Heart right ventricle (tissue), 16 donors: ENCODE measurements at regions of chr6 and their contacts with region 1.

Region 1: DNA sequence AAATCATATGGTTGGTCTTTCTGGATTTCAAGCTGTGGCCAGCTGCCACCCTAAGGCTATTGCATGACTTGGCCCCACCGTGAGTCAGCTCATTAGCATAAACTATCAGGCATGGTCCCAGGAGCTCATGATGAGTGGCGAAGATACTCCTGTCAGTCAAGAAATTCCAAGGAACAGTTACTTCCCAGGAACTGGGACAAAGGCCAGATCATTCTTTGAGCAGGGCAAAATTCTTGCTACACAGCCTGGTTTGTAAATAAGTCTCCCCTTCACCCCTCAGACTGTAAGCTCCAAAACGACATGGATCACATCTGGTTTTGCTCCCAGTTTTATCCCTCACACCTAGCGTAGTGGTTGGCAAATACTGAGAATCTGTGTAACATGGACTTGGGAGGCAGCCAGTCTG is 33.0 kb upstream of the KIAA1586 start:
- DNase-seq: no peak
- ATAC-seq: no peak
- H3K4me3 ChIP-seq: no peak overlapping the region
- H3K27ac ChIP-seq: no peak overlapping the region
- H3K4me1 ChIP-seq: no peaks in the 10 kb centered on the region
- H3K27me3 ChIP-seq: no peaks in the 10 kb centered on the region
- CTCF ChIP-seq: no peak

Region 2: DNA sequence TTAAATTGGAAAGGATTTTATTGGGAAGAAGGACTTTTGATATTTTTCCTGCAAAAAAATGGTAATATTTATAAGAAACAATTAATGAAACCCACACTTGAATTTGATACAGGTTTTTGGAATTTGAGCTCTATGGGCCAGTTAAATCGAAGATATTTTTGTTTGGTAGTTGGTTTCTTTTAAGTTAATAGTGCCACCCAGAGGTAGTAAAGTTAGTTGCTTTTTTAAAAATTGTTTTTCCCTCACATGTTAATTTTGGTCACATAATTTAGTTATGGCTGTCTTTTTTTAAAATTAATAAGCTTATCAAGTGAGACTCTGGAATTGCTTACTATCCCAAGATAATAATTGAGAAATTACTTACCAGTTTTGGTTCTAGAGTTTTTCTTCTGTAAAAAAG is 311.0 kb after region 1 on chr6:
- intact Hi-C with region 1: loop called in 3 of 10 experiments (anchors 10 kb)
- DNase-seq: no peak
- ATAC-seq: no peak
- H3K4me3 ChIP-seq: no peak overlapping the region
- H3K27ac ChIP-seq: no peak overlapping the region
- H3K4me1 ChIP-seq: no peaks in the 10 kb centered on the region
- H3K27me3 ChIP-seq: no peaks in the 10 kb centered on the region
- CTCF ChIP-seq: peak in 8 of 9 donors; percentile 20 to 61 (median 56)